ENCODE measurements at regions of chr4 and their contacts with region 1.

Region 1: GRCh38 chr4:48851651-48852050 is 20.8 kb downstream of the OCIAD1 start:
- DNase-seq: no peak
- ATAC-seq: no peak
- H3K4me3 ChIP-seq: no peak overlapping the region
- H3K27ac ChIP-seq: no peak overlapping the region
- H3K4me1 ChIP-seq: no peaks in the 10 kb centered on the region
- H3K27me3 ChIP-seq: no peaks in the 10 kb centered on the region
- CTCF ChIP-seq: no peak

Region 2: GRCh38 chr4:48827622-48828021 is 24.0 kb before region 1 on chr4:
- CTCF ChIA-PET with region 1: no interaction called
- POLR2A ChIA-PET with region 1: interaction called, 13 read pairs
- in situ Hi-C with region 1: no loop called
- intact Hi-C with region 1: no loop called
- DNase-seq: no peak
- ATAC-seq: no peak
- H3K4me3 ChIP-seq: no peak overlapping the region
- H3K27ac ChIP-seq: no peak overlapping the region
- H3K4me1 ChIP-seq: peaks cover 3% of the 10 kb centered on the region; the same call in 1 of the 2 replicates
- H3K27me3 ChIP-seq: no peaks in the 10 kb centered on the region
- CTCF ChIP-seq: no peak

Region 3: GRCh38 chr4:48898733-48899431 is 47.2 kb after region 1 on chr4:
- CTCF ChIA-PET with region 1: no interaction called
- POLR2A ChIA-PET with region 1: no interaction called
- in situ Hi-C with region 1: no loop called
- intact Hi-C with region 1: no loop called
- DNase-seq: no peak
- ATAC-seq: no peak; the same call in 1 of the 2 replicates
- H3K4me3 ChIP-seq: no peak overlapping the region
- H3K27ac ChIP-seq: no peak overlapping the region
- H3K4me1 ChIP-seq: peaks cover 11% of the 10 kb centered on the region
- H3K27me3 ChIP-seq: no peaks in the 10 kb centered on the region
- CTCF ChIP-seq: no peak

Measured in Panc1 (cell line).